ENCODE measurements at regions of chr5 and their contacts with region 1.

Region 1: DNA sequence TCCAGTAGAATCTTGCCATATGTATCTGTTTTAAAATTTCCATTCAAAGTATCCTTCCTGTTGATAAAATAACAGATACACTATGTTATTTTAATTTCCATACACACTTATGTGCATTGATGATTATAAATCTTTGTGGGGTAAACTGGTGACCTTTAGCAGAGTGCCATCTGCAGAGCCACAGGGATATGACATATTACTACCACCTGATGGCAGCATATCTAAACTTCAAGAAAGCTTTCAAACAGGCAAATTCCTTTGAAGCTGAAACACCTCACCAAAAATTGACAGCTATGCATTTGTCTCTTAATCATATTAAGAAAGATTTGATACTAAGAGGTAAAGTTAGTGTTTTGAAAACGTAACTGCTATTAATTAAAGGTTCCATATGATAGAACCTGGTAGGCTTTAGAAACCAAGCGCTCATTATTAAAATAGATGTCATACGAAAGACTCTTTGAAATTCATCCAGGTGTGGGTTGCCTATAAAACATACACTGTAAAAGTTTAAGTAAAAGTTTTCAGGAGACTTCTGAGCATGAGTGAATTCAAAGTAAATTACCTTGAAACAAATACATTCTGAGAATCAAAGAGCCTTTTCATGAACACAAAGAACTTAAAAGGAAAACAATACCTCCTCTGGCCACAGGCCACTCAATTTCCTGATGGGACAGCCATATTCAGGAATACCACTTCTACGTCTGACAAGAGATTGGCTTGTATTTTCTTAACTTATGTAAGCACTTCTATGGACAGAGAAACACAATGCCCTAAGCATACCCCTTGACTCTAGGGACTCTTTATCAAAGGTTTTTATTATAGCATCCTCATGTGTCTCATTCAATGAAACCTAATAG is 93.3 kb downstream of the KIAA0825 start:
- DNase-seq: peak; percentile 53
- ATAC-seq: peak; percentile 69
- H3K4me3 Mint-ChIP-seq: no peak overlapping the region
- H3K27ac Mint-ChIP-seq: no peak overlapping the region
- H3K4me1 Mint-ChIP-seq: peaks cover 5% of the 10 kb centered on the region
- H3K27me3 Mint-ChIP-seq: no peaks in the 10 kb centered on the region

Region 2: GRCh38 chr5:94422812-94423211 is 102.3 kb before region 1 on chr5:
- CTCF ChIA-PET with region 1: no interaction called
- POLR2A ChIA-PET with region 1: no interaction called
- DNase-seq: no peak
- ATAC-seq: no peak
- H3K4me3 Mint-ChIP-seq: no peak overlapping the region
- H3K27ac Mint-ChIP-seq: no peak overlapping the region
- H3K4me1 Mint-ChIP-seq: no peaks in the 10 kb centered on the region
- H3K27me3 Mint-ChIP-seq: no peaks in the 10 kb centered on the region

Region 3: DNA sequence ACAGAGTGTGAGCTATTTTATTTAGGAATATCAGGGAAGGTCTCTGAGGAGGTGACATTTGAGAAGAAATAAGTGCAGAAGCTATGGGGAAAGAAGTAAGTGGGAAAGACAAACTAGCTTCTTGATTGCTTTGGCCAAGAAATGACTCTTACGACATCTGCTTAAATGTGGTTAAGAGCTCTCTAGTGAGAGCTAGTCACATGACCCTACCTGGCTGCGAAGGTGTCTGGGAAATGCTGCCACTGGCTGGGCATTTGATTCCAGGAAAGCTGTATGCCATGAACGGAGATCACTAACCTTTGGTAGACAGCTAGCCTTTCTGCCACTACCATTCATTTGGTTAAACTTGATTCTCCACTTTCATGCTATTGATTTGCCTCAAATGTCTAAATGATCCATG is 13.2 kb after region 1 on chr5:
- CTCF ChIA-PET with region 1: no interaction called
- POLR2A ChIA-PET with region 1: no interaction called
- DNase-seq: no peak
- ATAC-seq: no peak
- H3K4me3 Mint-ChIP-seq: no peak overlapping the region
- H3K27ac Mint-ChIP-seq: no peak overlapping the region
- H3K4me1 Mint-ChIP-seq: no peaks in the 10 kb centered on the region
- H3K27me3 Mint-ChIP-seq: no peaks in the 10 kb centered on the region

Region 4: DNA sequence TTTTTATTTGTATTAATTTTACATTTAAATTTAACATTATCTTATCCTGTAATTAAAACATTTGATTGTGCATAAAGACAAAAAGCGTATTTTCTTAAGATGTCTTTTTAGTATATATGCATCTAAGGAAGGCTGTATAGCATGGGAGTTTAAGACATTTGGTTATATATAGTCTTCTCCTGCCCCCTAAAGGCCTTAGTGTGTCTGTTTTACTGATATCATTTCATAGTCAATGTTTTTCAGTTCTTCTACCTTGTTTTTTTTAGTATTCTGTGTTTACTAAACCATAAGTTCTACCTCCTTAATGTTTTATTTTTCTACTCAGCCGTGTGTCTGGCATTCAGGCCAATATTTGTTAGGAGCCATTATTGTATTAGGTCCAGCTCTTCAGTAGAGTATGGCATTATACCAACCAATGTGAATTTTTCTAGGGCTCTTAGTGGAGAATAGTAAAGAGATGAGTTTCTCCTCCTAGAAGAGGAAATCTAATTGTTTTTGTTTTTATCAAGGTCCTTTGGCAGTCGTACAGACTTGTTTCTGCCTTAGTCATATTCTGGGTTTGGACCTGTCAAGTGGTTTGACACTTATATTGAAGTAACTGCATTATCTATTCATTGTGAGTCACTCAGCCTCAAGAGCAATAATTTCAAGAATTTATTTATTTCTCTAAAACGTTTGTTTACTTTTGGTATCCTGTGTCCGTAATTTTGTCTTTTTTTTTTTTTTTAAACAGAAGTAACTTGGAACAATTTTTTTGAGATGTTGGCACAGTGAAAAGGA is 168.2 kb after region 1 on chr5:
- CTCF ChIA-PET with region 1: interaction called, 12 read pairs
- POLR2A ChIA-PET with region 1: no interaction called
- DNase-seq: no peak
- ATAC-seq: no peak
- H3K4me3 Mint-ChIP-seq: no peak overlapping the region
- H3K27ac Mint-ChIP-seq: no peak overlapping the region
- H3K4me1 Mint-ChIP-seq: no peaks in the 10 kb centered on the region
- H3K27me3 Mint-ChIP-seq: no peaks in the 10 kb centered on the region

Region 5: GRCh38 chr5:94740286-94740685 is 215.2 kb after region 1 on chr5:
- CTCF ChIA-PET with region 1: interaction called, 41 read pairs
- POLR2A ChIA-PET with region 1: no interaction called
- DNase-seq: no peak
- ATAC-seq: no peak
- H3K4me3 Mint-ChIP-seq: no peak overlapping the region
- H3K27ac Mint-ChIP-seq: no peak overlapping the region
- H3K4me1 Mint-ChIP-seq: no peaks in the 10 kb centered on the region
- H3K27me3 Mint-ChIP-seq: peaks cover 6% of the 10 kb centered on the region